ENCODE measurements at regions of chr18 and their contacts with region 1.

Region 1: DNA sequence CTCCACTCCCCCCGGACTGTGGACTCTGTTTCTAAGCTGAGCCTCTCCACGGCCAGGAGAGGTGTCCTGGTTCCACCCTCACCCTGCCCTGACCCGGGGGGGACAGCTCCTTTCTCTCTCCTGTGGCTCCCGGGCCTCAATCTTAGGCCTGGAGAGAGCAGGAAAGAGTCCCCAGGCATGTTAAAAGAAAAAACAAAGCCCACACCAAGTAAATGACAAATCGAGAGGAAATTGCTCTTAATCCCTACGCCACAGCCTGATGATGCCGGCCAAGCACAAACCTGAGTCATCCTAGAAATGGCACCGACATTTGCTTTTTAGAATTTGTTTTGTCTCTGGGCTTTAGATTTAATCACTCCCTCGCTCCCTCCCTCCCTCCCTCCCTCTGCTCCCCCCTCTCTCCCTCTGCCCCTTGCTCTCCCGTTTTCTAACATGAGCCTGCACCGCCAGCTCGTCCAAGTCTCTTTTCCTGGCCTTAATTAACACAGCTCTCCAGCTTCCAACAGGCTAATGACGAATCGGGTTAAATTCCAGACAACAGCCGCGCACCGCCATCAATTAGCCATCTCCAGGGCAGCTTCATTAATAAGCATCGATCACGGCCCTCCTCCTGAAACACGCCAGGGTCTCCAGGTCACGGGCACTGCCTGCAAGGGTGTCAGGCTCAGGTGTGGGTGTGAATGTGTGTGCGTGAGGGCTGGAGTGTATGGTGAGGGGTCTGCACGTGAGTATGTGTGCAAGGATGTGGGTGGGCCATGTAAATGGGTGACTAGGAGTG is 230.8 kb downstream of the CELF4 start:
- DNase-seq: no peak
- H3K4me3 ChIP-seq: no peak overlapping the region
- H3K27ac ChIP-seq: no peak overlapping the region
- H3K4me1 ChIP-seq: no peaks in the 10 kb centered on the region
- H3K27me3 ChIP-seq: no peaks in the 10 kb centered on the region
- CTCF ChIP-seq: no peak

Region 2: DNA sequence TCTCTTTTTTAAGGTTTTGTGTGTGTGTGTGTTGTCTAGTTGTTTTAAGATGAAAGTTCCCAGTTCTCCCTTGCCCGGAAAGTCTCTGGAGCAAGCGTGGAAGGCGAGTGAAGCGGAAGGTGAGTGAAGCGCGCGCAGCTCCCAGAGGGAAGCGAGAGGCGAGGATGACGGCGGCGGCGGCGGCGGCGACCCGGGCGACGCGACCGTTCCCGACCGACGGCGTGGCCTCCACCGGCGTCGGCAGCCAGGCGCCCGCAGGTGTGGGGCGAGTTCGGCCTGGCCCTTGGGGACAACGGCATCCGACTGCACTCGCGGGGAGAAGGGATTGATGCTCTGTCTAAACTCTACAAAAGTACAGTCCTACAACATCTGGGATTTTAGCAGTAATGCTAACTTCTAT is 91.1 kb before region 1 on chr18:
- CTCF ChIA-PET with region 1: no interaction called
- dilution Hi-C with region 1: loop called (anchors 5 kb)
- in situ Hi-C with region 1: no loop called
- intact Hi-C with region 1: no loop called
- DNase-seq: no peak
- H3K4me3 ChIP-seq: no peak overlapping the region
- H3K27ac ChIP-seq: no peak overlapping the region
- H3K4me1 ChIP-seq: no peaks in the 10 kb centered on the region
- H3K27me3 ChIP-seq: peaks cover 2% of the 10 kb centered on the region
- CTCF ChIP-seq: no peak

Region 3: GRCh38 chr18:37254236-37254754 is 80.5 kb before region 1 on chr18:
- CTCF ChIA-PET with region 1: no interaction called
- dilution Hi-C with region 1: no loop called
- in situ Hi-C with region 1: no loop called
- intact Hi-C with region 1: no loop called
- DNase-seq: no peak
- H3K4me3 ChIP-seq: peak overlapping the region in 2 of 3 experiments; percentile 38 to 39
- H3K27ac ChIP-seq: no peak overlapping the region
- H3K4me1 ChIP-seq: peaks cover 3% of the 10 kb centered on the region
- H3K27me3 ChIP-seq: no peaks in the 10 kb centered on the region
- CTCF ChIP-seq: no peak

Measured in mammary epithelial cell (primary cell).